ENCODE measurements at regions of chr18 and their contacts with region 1.

Region 1: GRCh38 chr18:21612125-21612991 is at the start of gene SNRPD1:
- DNase-seq: peak; percentile 64
- ATAC-seq: peak; percentile 99
- H3K4me3 ChIP-seq: peak within 1 kb of the TSS; percentile 85 to 98
- H3K27ac ChIP-seq: peak within 1 kb of the TSS; percentile 97
- H3K4me1 ChIP-seq: peaks cover 9% of the 10 kb centered on the region
- H3K27me3 ChIP-seq: no peaks in the 10 kb centered on the region
- CTCF ChIP-seq: peak; percentile 97
- total RNA-seq, gene SNRPD1: 94.2 TPM

Region 2: GRCh38 chr18:21194871-21195771 is 417.2 kb before region 1 on chr18:
- CTCF ChIA-PET with region 1: interaction called, 17 read pairs
- POLR2A ChIA-PET with region 1: no interaction called
- in situ Hi-C with region 1: no loop called
- intact Hi-C with region 1: no loop called
- DNase-seq: no peak
- ATAC-seq: no peak
- H3K4me3 ChIP-seq: no peak overlapping the region
- H3K27ac ChIP-seq: no peak overlapping the region
- H3K4me1 ChIP-seq: no peaks in the 10 kb centered on the region
- H3K27me3 ChIP-seq: no peaks in the 10 kb centered on the region
- CTCF ChIP-seq: peak; percentile 61

Region 3: GRCh38 chr18:21203096-21203495 is 409.3 kb before region 1 on chr18:
- CTCF ChIA-PET with region 1: no interaction called
- POLR2A ChIA-PET with region 1: interaction called, 15 read pairs
- in situ Hi-C with region 1: no loop called
- intact Hi-C with region 1: no loop called
- DNase-seq: no peak
- ATAC-seq: no peak
- H3K4me3 ChIP-seq: no peak overlapping the region
- H3K27ac ChIP-seq: no peak overlapping the region
- H3K4me1 ChIP-seq: no peaks in the 10 kb centered on the region
- H3K27me3 ChIP-seq: no peaks in the 10 kb centered on the region
- CTCF ChIP-seq: no peak

Region 4: GRCh38 chr18:21634588-21635199 is 22.3 kb after region 1 on chr18:
- CTCF ChIA-PET with region 1: no interaction called
- POLR2A ChIA-PET with region 1: no interaction called
- in situ Hi-C with region 1: no loop called
- intact Hi-C with region 1: no loop called
- DNase-seq: no peak
- ATAC-seq: no peak
- H3K4me3 ChIP-seq: no peak overlapping the region
- H3K27ac ChIP-seq: no peak overlapping the region
- H3K4me1 ChIP-seq: no peaks in the 10 kb centered on the region
- H3K27me3 ChIP-seq: no peaks in the 10 kb centered on the region
- CTCF ChIP-seq: no peak

Region 5: DNA sequence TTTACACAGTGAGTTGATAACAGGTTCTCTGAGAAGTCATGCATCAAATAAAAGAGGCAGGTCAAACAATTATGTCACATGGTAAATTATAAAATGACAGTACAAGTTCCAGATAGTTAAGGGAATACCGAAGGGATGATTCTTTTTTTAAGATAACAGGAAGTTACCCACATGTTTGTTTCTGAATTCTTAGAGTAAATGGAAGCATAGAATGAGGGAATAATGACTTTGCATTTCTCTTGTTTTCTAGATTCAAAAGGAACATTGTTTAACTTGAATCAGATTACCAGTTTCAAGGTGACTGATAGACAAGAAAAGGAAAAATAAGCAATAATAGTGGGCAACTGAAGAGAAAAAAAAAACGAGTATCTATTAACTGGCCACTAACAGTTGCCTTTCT is 252.7 kb after region 1 on chr18:
- CTCF ChIA-PET with region 1: no interaction called
- POLR2A ChIA-PET with region 1: no interaction called
- in situ Hi-C with region 1: no loop called
- intact Hi-C with region 1: loop called (anchors 10 kb)
- DNase-seq: no peak
- ATAC-seq: no peak
- H3K4me3 ChIP-seq: no peak overlapping the region
- H3K27ac ChIP-seq: no peak overlapping the region
- H3K4me1 ChIP-seq: no peaks in the 10 kb centered on the region
- H3K27me3 ChIP-seq: no peaks in the 10 kb centered on the region
- CTCF ChIP-seq: no peak

Measured in Panc1 (cell line).